ENCODE measurements at regions of chr11 and their contacts with region 1.

Region 1: DNA sequence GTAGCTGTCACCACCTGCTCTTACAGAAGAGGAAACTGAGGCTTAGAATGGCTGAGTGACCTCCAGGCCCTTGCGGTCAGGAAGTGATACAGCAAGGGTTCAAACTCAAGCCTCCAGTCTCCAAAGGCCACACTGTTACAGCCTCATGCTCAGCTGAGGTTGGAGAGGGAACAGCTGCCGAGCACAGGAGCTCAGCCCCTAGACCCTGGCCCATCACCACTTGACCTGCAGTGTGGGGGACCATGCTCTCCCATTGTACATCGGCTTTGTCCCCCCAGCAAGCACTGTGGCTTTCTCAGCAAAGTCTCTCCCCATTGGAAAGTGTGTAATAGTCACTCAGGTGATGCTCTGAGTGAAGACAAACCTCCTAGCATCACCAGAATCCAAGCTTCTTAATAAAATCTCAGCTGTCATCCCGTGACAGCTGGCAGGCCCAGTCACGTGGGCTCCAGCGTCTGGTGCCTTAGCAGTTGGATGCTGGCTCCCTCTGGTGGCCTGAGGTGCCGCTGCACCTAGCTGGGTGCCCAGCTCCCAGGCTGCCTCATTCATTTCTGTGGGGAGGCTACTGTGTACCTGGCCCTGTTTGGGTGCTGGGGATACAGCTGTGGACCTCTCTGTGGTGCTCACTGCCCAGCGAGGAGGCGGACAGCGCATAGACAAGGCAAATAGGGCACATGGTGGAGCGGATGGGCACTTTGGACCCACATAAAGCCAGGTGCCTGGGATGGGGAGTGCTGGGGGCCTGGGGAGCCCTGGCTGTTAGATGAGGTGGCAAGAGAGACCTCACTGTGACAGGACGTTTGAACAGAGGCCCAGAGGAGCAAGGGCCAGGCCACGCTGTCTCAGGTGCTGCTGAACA is 19.1 kb upstream of the MYRF start:
- DNase-seq: peak; percentile 73
- H3K4me3 Mint-ChIP-seq: no peak overlapping the region
- H3K27ac Mint-ChIP-seq: no peak overlapping the region
- H3K4me1 Mint-ChIP-seq: peaks cover 4% of the 10 kb centered on the region
- H3K27me3 Mint-ChIP-seq: peaks cover 3% of the 10 kb centered on the region

Region 2: GRCh38 chr11:61679893-61680621 is 53.3 kb before region 1 on chr11 and contains the start of gene DAGLA:
- intact Hi-C with region 1: loop called (anchors 1 kb)
- DNase-seq: peak; percentile 68
- H3K4me3 Mint-ChIP-seq: peak within 1 kb of the TSS; percentile 75
- H3K27ac Mint-ChIP-seq: no peak within 1 kb of the TSS
- H3K4me1 Mint-ChIP-seq: no peaks in the 10 kb centered on the region
- H3K27me3 Mint-ChIP-seq: peaks cover 42% of the 10 kb centered on the region
- total RNA-seq, gene DAGLA: 0.18 and 0.20 TPM in 2 replicates

Region 3: GRCh38 chr11:61695917-61696316 is 37.4 kb before region 1 on chr11:
- intact Hi-C with region 1: loop called (anchors 1 kb)
- DNase-seq: peak; percentile 90
- H3K4me3 Mint-ChIP-seq: peak overlapping the region; percentile 70
- H3K27ac Mint-ChIP-seq: peak overlapping the region; percentile 82
- H3K4me1 Mint-ChIP-seq: peaks cover 25% of the 10 kb centered on the region
- H3K27me3 Mint-ChIP-seq: peaks cover 3% of the 10 kb centered on the region

Region 4: DNA sequence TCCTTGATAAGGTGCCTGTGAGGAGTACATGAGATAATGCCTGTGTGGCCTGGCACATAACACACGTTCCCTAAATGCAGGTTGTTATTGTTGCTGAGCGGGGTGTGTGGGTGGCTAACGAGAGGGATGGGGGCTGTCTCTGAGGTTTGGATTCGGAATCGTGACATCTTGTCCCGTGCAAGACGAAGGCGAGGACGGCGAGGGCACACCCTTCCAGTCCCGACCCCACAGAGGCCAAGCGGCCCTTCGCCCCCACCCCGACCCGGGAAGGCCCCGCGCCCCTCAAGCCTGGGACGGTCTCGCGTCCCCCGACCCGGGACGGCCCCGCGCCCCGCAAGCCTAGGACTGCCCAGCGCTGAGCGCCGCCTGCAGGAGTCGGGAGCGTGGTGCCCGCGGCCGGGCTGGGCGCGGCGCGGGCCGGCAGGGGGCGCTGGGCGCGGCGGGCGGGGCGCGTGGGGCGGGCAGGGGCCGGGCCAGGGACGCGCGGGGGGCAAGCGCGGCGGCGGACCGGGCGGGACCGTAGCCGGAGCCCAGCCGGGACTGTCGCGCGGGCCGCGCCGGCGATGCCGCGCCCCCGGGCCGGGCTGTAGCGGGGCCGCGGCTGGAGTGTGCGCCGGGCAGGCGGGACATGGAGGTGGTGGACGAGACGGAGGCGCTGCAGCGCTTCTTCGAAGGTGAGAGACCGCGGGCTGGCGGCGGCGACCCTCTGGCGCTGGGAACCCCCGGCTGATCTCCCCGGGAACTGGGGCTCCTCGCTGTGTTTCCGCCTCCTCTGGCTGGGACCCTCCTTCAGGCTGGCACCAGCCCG is 19.0 kb after region 1 on chr11 and contains the start of gene MYRF:
- intact Hi-C with region 1: no loop called
- DNase-seq: peak; percentile 52
- H3K4me3 Mint-ChIP-seq: peak within 1 kb of the TSS; percentile 76
- H3K27ac Mint-ChIP-seq: no peak within 1 kb of the TSS
- H3K4me1 Mint-ChIP-seq: no peaks in the 10 kb centered on the region
- H3K27me3 Mint-ChIP-seq: peaks cover 31% of the 10 kb centered on the region
- total RNA-seq, gene MYRF: 0.78 and 0.99 TPM in 2 replicates

Measured in activated T-helper 1 cell treated with anti-CD3 and anti-CD28 coated beads, Interleukin-12 subunit alpha, Interleukin-12 subunit beta, Interleukin-2, Interleukin-4 antibody, amounts not matched to agents 30 ng/mL and 10 ng/mL and 1 ng/mL, durations not matched to agents 14 hours and 24 hours and 36 hours (primary cell).